Heart right ventricle (tissue), 16 donors: ENCODE measurements at regions of chr5 and their contacts with region 1.

Region 1: DNA sequence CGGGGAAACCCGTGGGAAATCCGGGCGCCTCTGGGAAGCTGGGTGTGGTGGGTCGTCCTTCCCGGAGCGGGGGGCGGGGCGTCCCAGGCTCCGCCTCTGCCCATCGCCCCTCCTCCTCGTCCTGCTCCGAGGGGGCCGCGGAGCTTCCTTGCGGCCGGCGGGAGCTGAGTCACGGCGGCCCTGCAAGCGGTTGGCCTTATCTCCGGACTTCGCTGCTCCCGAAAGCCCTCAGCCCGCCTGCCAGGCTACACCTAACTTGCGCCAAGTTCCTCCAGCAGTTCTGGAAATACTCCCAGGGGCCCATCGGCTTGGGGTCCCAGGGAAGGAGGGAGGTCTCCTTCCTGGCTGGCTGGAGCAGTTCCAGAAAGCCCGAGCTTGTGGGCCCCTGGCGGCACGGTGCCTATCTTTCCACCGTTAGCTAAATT is 54.1 kb upstream of the CDKN2AIPNL start:
- DNase-seq: peak; percentile 87 to 93
- ATAC-seq: peak; percentile 87 to 96 (median 92)
- H3K4me3 ChIP-seq: peak overlapping the region in 9 of 10 donors; percentile 45 to 70 (median 53)
- H3K27ac ChIP-seq: peak overlapping the region; percentile 90 to 99 (median 97)
- H3K4me1 ChIP-seq: peaks cover 12 to 39% (median 35%) of the 10 kb centered on the region in 9 donors
- H3K27me3 ChIP-seq: no peaks in the 10 kb centered on the region
- CTCF ChIP-seq: no peak

Region 2: GRCh38 chr5:134370871-134371833 is 94.7 kb before region 1 on chr5 and contains the start of gene UBE2B:
- intact Hi-C with region 1: loop called in 2 of 10 experiments (anchors 1 to 5 kb)
- DNase-seq: peak; percentile 95 to 99
- ATAC-seq: peak; percentile 91 to 97 (median 95)
- H3K4me3 ChIP-seq: peak within 1 kb of the TSS; percentile 64 to 97 (median 84)
- H3K27ac ChIP-seq: peak within 1 kb of the TSS; percentile 90 to 100 (median 98)
- H3K4me1 ChIP-seq: peaks cover 0 to 64% (median 51%) of the 10 kb centered on the region in 9 donors
- H3K27me3 ChIP-seq: no peaks in the 10 kb centered on the region
- CTCF ChIP-seq: no peak
- total RNA-seq, gene UBE2B: 195 to 260 (median 227) TPM

Region 3: GRCh38 chr5:134436523-134437339 is 29.1 kb before region 1 on chr5:
- intact Hi-C with region 1: loop called in 3 of 10 experiments (anchors 1 to 2 kb)
- DNase-seq: peak; percentile 52 to 70
- ATAC-seq: peak; percentile 51 to 89 (median 81)
- H3K4me3 ChIP-seq: peak overlapping the region in 3 of 10 donors; percentile 20 to 24 (median 23)
- H3K27ac ChIP-seq: peak overlapping the region; percentile 65 to 91 (median 80)
- H3K4me1 ChIP-seq: peaks cover 25 to 41% (median 38%) of the 10 kb centered on the region in 9 donors
- H3K27me3 ChIP-seq: no peaks in the 10 kb centered on the region
- CTCF ChIP-seq: no peak

Region 4: GRCh38 chr5:134489227-134489944 is 23.6 kb after region 1 on chr5:
- intact Hi-C with region 1: no loop called
- DNase-seq: no peak
- ATAC-seq: no peak
- H3K4me3 ChIP-seq: no peak overlapping the region
- H3K27ac ChIP-seq: no peak overlapping the region
- H3K4me1 ChIP-seq: no peaks in the 10 kb centered on the region
- H3K27me3 ChIP-seq: no peaks in the 10 kb centered on the region
- CTCF ChIP-seq: no peak

Region 5: GRCh38 chr5:134503088-134503946 is 37.5 kb after region 1 on chr5:
- intact Hi-C with region 1: loop called in 6 of 10 experiments (anchors 1 to 5 kb)
- DNase-seq: peak; percentile 64 to 68
- ATAC-seq: peak; percentile 56 to 87 (median 66)
- H3K4me3 ChIP-seq: no peak overlapping the region
- H3K27ac ChIP-seq: peak overlapping the region; percentile 23 to 86 (median 78)
- H3K4me1 ChIP-seq: peaks cover 4 to 46% (median 36%) of the 10 kb centered on the region in 9 donors
- H3K27me3 ChIP-seq: no peaks in the 10 kb centered on the region
- CTCF ChIP-seq: no peak

Region 6: DNA sequence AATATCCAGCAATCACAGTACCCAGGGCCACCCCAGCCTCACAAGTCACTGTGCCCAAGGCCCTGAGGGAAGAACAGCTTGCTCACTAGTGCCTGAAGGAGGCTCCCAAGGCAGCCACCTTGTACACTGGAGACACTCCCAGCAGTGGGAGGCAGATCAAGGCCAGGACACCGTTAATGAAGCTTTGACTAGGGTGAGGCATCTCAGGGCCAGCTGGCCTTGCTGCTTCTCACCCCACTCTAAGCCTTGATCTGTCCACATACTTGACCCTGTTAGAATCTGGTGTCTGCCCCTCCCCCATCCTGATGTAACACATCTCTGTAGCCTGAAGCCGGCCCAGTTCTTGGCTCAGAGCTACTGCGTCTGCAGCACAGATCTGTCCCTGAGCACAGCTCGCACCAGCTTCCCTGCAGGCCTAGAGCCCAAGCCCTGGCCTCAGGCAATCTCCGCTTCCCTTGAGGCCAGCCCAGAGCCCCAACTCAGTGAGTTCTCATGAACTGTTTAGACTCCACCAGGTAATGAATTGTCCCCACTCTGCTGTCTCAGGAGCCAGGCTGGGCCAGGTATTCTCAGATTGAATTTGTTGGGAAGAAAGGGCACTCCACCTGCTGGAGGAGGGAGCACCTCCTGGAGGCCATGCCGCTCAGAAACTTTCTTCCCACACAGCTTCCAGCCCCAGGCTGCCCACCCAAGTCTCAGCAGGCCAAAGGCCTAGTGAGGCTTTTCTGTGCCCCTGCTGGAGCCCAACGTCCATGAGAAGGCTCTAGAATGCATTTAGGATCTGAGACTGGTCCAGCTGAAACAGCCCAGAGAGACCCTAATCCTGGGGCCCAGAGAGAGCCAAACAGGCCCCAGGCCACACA is 46.2 kb after region 1 on chr5:
- intact Hi-C with region 1: loop called in 4 of 10 experiments (anchors 5 to 10 kb)
- DNase-seq: peak; percentile 71 to 74
- ATAC-seq: peak; percentile 77 to 92 (median 88)
- H3K4me3 ChIP-seq: no peak overlapping the region
- H3K27ac ChIP-seq: peak overlapping the region in 9 of 10 donors; percentile 19 to 79 (median 60)
- H3K4me1 ChIP-seq: peaks cover 4 to 21% (median 17%) of the 10 kb centered on the region in 9 donors
- H3K27me3 ChIP-seq: no peaks in the 10 kb centered on the region
- CTCF ChIP-seq: peak in 7 of 9 donors; percentile 14 to 46 (median 38)

Region 7: GRCh38 chr5:134564396-134564795 is 98.6 kb after region 1 on chr5:
- intact Hi-C with region 1: no loop called
- DNase-seq: no peak
- ATAC-seq: no peak
- H3K4me3 ChIP-seq: no peak overlapping the region
- H3K27ac ChIP-seq: no peak overlapping the region
- H3K4me1 ChIP-seq: peaks cover 17 to 52% (median 43%) of the 10 kb centered on the region in 9 donors
- H3K27me3 ChIP-seq: no peaks in the 10 kb centered on the region
- CTCF ChIP-seq: no peak

Region 8: GRCh38 chr5:134577796-134578363 is 112.1 kb after region 1 on chr5:
- intact Hi-C with region 1: loop called in 1 of 10 experiments (anchors 5 kb)
- DNase-seq: peak; percentile 74 to 85
- ATAC-seq: peak in 7 of 8 donors; percentile 36 to 65 (median 52)
- H3K4me3 ChIP-seq: no peak overlapping the region
- H3K27ac ChIP-seq: peak overlapping the region in 2 of 10 donors; percentile 41 to 48
- H3K4me1 ChIP-seq: peaks cover 16 to 63% (median 42%) of the 10 kb centered on the region in 9 donors
- H3K27me3 ChIP-seq: no peaks in the 10 kb centered on the region
- CTCF ChIP-seq: peak; percentile 65 to 91 (median 86)